Prostate gland (tissue), 2 donors: ENCODE measurements at regions of chr14 and their contacts with region 1.

Region 1: DNA sequence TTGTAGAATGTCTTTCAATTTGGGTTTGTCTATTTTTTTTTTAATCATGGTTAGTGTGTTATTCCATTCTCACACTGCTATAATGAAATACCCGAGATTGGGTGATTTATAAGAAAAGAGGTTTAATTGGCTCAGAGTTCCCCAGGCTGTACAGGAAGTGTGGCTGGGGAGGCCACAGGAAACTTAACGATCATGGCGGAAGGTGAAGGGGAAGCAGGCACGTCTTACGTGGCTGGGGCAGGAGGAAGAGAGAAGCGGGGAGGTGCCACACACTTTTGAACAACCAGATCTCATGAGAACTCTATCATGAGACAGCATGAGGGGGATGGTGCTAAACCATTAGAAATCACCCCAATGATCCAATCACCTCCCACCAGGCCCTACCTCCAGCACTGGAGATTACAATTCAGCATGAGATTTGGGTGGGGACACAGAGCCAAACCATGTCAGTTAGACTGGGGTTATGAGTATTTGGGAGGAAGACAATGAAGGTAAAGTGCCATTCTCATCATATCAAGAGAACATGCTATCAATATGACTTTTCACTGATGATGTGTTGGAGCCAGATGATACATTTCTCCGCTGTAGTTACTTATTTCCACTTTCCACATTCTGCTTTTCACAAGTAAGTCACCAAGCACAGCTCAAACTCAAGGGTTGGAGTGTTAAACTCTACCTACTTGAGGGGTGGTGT is 45.8 kb downstream of the AP5M1 start:
- DNase-seq: no peak
- H3K4me3 ChIP-seq: no peak overlapping the region
- H3K27ac ChIP-seq: no peak overlapping the region
- H3K4me1 ChIP-seq: no peaks in the 10 kb centered on the region
- H3K27me3 ChIP-seq: no peaks in the 10 kb centered on the region
- CTCF ChIP-seq: no peak
- POLR2A ChIP-seq: no peak

Region 2: GRCh38 chr14:56491299-56492285 is 823.0 kb before region 1 on chr14:
- intact Hi-C with region 1: loop called (anchors 5 kb)
- DNase-seq: peak; percentile 19
- H3K4me3 ChIP-seq: no peak overlapping the region
- H3K27ac ChIP-seq: no peak overlapping the region
- H3K4me1 ChIP-seq: no peaks in the 10 kb centered on the region
- H3K27me3 ChIP-seq: no peaks in the 10 kb centered on the region
- CTCF ChIP-seq: peak in 3 of 4 experiments; percentile 39 to 56 (median 51)
- POLR2A ChIP-seq: no peak

Region 3: GRCh38 chr14:57168138-57168679 is 146.3 kb before region 1 on chr14:
- intact Hi-C with region 1: no loop called
- DNase-seq: no peak
- H3K4me3 ChIP-seq: no peak overlapping the region
- H3K27ac ChIP-seq: no peak overlapping the region
- H3K4me1 ChIP-seq: no peaks in the 10 kb centered on the region
- H3K27me3 ChIP-seq: no peaks in the 10 kb centered on the region
- CTCF ChIP-seq: no peak
- POLR2A ChIP-seq: no peak